ENCODE measurements at regions of chr16 and their contacts with region 1.

Region 1: GRCh38 chr16:56608043-56608875 is at the start of gene MT2A:
- DNase-seq: peak; percentile 94 to 97
- ATAC-seq: peak; percentile 18 to 19
- H3K4me3 ChIP-seq: peak within 1 kb of the TSS; percentile 60 to 75 (median 70)
- H3K27ac ChIP-seq: peak within 1 kb of the TSS; percentile 95 to 99 (median 98)
- H3K4me1 ChIP-seq: peaks cover 71 to 83% of the 10 kb centered on the region in 2 donors
- H3K27me3 ChIP-seq: no peaks in the 10 kb centered on the region
- CTCF ChIP-seq: peak in 1 of 5 experiments; percentile 11
- POLR2A ChIP-seq: peak in 1 of 2 donors; percentile 99
- total RNA-seq, gene MT2A: 250 to 1,131 (median 795) TPM

Region 2: DNA sequence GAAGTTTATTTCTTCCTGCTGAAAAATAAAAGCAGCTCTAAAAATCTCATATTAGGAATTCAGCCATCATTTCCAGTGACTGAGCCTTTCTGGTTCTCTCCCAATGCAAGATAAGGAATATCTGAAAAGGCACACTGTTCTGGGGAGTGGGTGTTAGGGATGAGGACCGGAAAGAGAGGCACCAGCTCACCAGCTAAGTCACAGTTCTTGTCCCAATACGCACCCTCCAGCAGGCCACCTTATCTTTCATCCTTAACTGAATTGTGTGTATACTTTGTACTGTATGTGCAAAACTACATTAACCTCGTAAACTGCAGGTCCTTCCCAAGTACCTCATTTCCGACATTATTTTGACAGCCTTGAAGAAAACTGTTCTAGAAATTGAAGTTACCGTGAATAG is 193.9 kb before region 1 on chr16:
- in situ Hi-C with region 1: no loop called
- intact Hi-C with region 1: loop called (anchors 2 kb)
- DNase-seq: no peak
- ATAC-seq: no peak
- H3K4me3 ChIP-seq: no peak overlapping the region
- H3K27ac ChIP-seq: peak overlapping the region; percentile 77 to 96 (median 80)
- H3K4me1 ChIP-seq: peaks cover 57 to 65% of the 10 kb centered on the region in 2 donors
- H3K27me3 ChIP-seq: no peaks in the 10 kb centered on the region
- CTCF ChIP-seq: no peak
- POLR2A ChIP-seq: no peak

Region 3: DNA sequence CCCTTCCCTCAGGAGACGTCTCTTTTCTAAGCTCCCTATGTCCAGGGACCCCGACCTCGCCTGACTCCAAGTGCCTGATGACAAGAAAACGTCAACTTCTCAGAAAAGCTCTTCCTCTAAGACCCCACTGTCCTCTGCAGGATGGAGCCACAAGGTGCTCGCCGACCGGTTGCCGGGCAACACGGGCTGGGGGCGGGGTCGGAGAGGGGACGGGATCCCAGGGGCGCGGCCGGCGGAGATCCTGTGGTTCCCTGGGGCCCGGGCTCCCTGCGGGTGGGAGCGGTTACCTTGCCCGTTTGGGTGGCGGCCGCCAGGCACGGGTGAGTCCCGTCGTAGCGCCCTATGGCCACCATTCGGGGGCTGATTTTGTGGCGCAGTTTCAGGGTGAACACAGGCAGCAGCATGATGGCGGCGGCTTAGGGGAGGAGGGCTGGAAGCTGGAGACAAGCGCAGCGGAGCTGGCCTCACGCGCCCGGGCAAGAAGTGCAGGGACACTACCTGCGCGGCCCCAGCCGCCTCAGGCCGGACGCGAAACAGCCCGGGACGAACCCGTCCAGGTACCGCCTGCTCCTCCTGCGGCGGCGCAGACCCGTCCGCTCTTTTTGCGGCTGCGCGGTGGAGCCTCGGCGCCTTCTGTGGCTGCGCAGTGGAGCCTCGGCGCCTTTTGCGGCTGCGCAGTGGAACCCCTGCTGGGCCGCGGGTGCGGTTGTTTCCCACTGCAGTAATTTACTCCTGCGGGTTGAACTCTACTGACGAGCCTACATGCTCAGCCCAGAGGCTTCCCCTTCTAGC is 88.6 kb before region 1 on chr16 and contains the start of gene BBS2:
- in situ Hi-C with region 1: loop called in 1 of 4 experiments (anchors 10 kb)
- intact Hi-C with region 1: loop called (anchors 5 kb)
- DNase-seq: peak; percentile 79 to 85
- ATAC-seq: peak; percentile 88 to 90
- H3K4me3 ChIP-seq: peak within 1 kb of the TSS; percentile 90 to 99 (median 96)
- H3K27ac ChIP-seq: peak within 1 kb of the TSS; percentile 90 to 92 (median 91)
- H3K4me1 ChIP-seq: peaks cover 33 to 41% of the 10 kb centered on the region in 2 donors
- H3K27me3 ChIP-seq: no peaks in the 10 kb centered on the region
- CTCF ChIP-seq: peak in 1 of 5 experiments; percentile 12
- POLR2A ChIP-seq: peak; percentile 82 to 85
- total RNA-seq, gene BBS2: 25.2 to 52.0 (median 28.6) TPM

Region 4: DNA sequence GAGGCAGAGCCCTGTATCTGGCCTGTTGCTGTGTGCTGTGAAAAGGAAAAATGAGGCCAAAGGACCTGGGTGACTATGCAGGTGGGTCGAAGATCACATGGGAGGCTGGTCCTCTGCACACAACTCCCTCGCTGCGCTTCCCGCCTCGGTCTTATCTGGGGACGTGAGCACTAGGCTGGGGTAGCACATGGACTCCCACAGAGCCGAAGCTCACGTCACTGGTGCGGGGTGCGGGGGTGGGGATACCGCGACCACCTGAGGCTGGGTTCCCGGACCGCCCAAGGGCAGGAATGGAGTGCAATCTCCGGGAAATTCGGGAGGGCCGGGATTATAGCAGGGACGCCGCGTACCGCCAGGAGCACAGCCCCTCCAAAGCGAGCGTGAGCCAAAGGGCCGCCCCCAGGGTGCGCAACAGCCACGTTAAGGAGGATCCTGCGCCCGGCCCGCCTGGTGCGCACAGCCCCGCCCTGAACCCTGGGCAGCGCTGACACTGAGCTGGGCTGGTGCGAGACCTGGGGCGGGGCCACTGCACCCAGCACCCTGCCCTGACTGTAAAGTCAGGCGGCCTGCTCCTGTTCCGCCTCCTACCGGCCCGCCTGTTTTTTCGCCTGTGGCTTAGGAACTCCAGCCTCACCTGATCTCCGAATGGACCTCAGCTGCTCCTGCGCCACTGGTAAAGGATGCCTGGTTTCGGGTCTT is 35.0 kb after region 1 on chr16:
- in situ Hi-C with region 1: no loop called
- intact Hi-C with region 1: loop called (anchors 2 kb)
- DNase-seq: peak; percentile 27 to 54
- ATAC-seq: peak; percentile 51 to 59
- H3K4me3 ChIP-seq: peak overlapping the region; percentile 29 to 43 (median 38)
- H3K27ac ChIP-seq: peak overlapping the region; percentile 21 to 50 (median 34)
- H3K4me1 ChIP-seq: peaks cover 5 to 20% of the 10 kb centered on the region in 2 donors
- H3K27me3 ChIP-seq: peaks cover 2 to 11% (median 10%) of the 10 kb centered on the region in 3 donors
- CTCF ChIP-seq: peak in 4 of 5 experiments; percentile 32 to 49 (median 46)
- POLR2A ChIP-seq: no peak

Region 5: GRCh38 chr16:56667581-56668571 is 59.6 kb after region 1 on chr16 and contains the start of gene MT1G:
- in situ Hi-C with region 1: no loop called
- intact Hi-C with region 1: no loop called
- DNase-seq: no peak
- ATAC-seq: peak in 1 of 2 donors; percentile 40
- H3K4me3 ChIP-seq: peak within 1 kb of the TSS in 3 of 4 donors; percentile 9 to 18 (median 17)
- H3K27ac ChIP-seq: no peak within 1 kb of the TSS
- H3K4me1 ChIP-seq: peaks cover 0 to 9% of the 10 kb centered on the region in 2 donors
- H3K27me3 ChIP-seq: peaks cover 19 to 42% (median 36%) of the 10 kb centered on the region in 3 donors
- CTCF ChIP-seq: no peak
- POLR2A ChIP-seq: peak in 1 of 2 donors; percentile 26
- total RNA-seq, gene MT1G: 3.5 to 4.6 TPM in 2 of 4 donors, not detected in the others

Region 6: DNA sequence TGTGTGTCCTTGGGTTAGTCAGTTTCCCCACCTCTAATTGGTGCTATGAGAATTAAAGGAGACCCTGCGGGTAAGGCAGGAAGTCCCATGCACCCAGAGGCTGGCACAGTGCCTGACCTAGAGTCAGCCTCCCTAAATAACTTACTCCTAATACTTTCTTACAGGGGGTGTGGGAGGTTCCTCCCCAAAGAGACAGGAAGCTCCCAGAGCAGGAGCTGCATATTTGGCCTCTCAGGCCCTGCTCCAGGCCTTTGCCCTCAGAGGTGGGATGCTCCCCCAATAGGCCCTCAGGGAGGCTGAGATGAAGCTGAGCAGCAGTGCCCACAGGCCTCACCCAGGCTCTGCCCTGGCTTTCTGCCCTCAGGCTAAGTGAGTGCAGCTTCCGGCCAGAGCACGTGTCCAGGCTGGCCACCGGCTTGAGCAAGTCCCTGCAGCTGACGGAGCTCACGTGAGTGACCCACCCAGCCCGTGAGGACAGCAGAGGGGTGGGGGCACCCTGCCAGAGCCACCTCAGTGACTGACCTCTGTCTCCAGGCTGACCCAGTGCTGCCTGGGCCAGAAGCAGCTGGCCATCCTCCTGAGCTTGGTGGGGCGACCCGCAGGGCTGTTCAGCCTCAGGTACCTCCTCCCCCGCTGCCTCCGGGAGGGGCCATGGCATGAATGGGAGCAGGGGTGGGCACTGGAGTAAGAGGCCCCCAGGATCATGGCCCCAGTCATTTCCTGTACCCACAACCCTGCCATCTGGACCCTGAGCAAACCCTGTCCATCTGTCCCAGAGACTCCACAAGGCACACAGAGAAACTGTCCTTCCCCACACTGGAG is 453.0 kb after region 1 on chr16:
- in situ Hi-C with region 1: no loop called
- intact Hi-C with region 1: loop called (anchors 5 kb)
- DNase-seq: peak; percentile 85 to 97
- ATAC-seq: peak; percentile 89 to 94
- H3K4me3 ChIP-seq: peak overlapping the region in 3 of 4 donors; percentile 11 to 32 (median 23)
- H3K27ac ChIP-seq: peak overlapping the region; percentile 83 to 89 (median 85)
- H3K4me1 ChIP-seq: peaks cover 17 to 20% of the 10 kb centered on the region in 2 donors
- H3K27me3 ChIP-seq: no peaks in the 10 kb centered on the region
- CTCF ChIP-seq: peak in 1 of 5 experiments; percentile 27
- POLR2A ChIP-seq: peak; percentile 48 to 69